Posterior vena cava (tissue), 2 donors: ENCODE measurements at regions of chr6 and their contacts with region 1.

Region 1: GRCh38 chr6:125095580-125096301 is 57.8 kb upstream of the TPD52L1 start:
- DNase-seq: no peak

Region 2: GRCh38 chr6:125044066-125044465 is 51.7 kb before region 1 on chr6:
- intact Hi-C with region 1: loop called in 1 of 2 experiments (anchors 2 kb)
- DNase-seq: no peak

Region 3: GRCh38 chr6:125611573-125612344 is 516.0 kb after region 1 on chr6:
- intact Hi-C with region 1: no loop called
- DNase-seq: no peak